ENCODE measurements at regions of chr1 and their contacts with region 1.

Region 1: GRCh38 chr1:183246436-183246835 is 60.4 kb downstream of the LAMC2 start:
- H3K4me3 ChIP-seq: no peak overlapping the region
- H3K27ac ChIP-seq: no peak overlapping the region
- H3K4me1 ChIP-seq: no peaks in the 10 kb centered on the region
- CTCF ChIP-seq: no peak

Region 2: DNA sequence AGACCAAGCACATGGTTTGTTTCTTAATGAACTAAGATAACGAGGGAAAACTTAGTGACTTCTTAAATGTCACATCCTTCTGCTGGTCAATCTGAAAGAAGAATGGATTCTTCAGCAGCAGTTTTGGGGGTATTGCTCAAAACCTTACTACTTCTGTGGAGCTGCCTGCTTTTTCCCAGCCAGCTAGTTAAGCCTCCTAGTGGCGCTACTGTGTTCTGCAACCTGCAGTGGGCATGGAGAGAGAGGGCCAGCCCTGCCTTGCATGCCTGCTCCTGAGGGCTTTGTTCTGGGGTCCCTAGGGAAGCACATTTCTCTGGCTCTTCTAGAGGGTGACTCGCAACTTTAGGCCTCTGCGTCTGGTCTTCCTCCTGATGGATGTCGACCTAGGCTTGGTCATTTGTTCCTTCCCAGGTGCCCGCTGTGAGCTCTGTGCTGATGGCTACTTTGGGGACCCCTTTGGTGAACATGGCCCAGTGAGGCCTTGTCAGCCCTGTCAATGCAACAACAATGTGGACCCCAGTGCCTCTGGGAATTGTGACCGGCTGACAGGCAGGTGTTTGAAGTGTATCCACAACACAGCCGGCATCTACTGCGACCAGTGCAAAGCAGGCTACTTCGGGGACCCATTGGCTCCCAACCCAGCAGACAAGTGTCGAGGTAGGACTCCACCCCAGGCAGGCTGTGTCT is 18.3 kb before region 1 on chr1:
- CTCF ChIA-PET with region 1: interaction called, 135 read pairs
- POLR2A ChIA-PET with region 1: no interaction called
- H3K4me3 ChIP-seq: no peak overlapping the region
- H3K27ac ChIP-seq: no peak overlapping the region
- H3K4me1 ChIP-seq: no peaks in the 10 kb centered on the region
- CTCF ChIP-seq: no peak; the same call in 1 of the 2 replicates

Region 3: DNA sequence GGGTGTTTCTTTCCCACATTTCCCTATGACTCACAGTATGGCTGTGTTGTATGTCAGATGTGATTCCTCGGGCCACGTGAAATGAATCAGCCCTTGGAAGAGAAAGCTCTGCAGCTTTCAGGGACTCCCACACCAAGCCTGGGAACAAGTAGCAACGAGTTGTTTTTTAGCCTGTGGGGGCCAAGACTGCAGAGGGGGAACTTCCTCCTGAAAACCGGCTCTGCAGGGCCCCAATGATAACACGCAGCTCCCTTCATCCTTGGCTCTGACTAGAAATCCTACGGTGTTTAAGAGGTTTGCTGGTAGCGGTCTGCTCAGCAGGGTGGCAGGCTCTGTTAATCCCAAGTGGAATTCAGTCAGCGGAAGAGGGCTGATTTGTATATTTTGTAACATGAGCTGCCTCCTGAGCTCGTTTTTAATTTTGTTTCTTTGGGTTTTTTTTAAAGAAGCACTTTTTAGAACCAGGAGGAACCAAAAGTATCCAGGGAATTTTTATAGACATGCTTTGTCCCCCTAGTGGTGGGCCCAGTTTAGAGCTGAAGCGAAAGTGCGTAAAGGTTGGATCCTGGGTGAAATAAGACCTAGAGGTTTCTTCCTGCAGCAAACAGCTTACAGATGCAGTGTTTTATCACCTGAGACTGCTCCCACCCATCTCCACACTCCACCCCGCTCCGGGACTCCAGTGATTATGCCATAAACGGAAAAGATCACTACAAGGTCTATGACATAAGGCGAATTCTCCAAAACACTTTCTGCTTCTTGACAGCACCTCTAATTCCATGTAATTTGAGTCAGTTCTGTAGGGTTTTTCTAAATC is 11.6 kb before region 1 on chr1:
- CTCF ChIA-PET with region 1: interaction called, 135 read pairs
- POLR2A ChIA-PET with region 1: interaction called, 5 read pairs
- H3K4me3 ChIP-seq: peak overlapping the region; percentile 16
- H3K27ac ChIP-seq: peak overlapping the region; percentile 68
- H3K4me1 ChIP-seq: peaks cover 6% of the 10 kb centered on the region
- CTCF ChIP-seq: peak; percentile 67

Measured in HEK293 (cell line).